ENCODE measurements at regions of chr9 and their contacts with region 1.

Region 1: DNA sequence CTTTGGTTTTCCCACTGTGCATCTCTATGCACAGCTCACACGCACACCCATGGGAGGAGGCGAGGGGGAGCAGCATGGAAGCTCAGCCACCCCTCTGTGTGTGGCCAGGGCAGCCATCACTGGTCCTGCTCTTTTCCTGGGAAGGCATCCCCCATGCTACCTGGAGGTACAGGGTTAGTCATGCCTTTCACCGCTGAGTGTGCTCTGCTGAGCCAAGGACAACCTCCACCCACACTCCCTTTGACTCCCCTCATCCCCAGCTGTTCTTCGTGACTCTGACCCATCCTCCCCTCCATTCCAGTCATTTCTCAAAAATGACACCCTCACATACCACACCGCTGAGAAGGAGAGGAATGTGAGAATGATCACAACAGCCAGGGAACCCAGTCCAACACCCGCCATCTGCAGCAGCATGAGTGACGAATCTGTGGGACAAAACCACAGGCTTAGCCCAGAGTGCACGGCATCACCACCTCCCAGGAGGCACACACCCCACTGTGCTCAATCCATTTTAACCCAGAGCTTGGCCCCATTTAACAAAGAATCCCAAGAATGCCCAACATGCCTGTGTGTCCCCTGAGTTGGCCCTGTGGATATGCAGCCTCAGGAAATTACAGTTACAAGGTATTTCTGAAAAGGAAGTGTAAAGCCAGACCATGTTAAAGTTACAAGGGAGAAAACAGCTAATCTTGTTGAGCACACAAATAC is 133.4 kb downstream of the SUSD1 start:
- DNase-seq: peak; percentile 96 to 99
- H3K4me3 ChIP-seq: no peak overlapping the region
- H3K27ac ChIP-seq: peak overlapping the region; percentile 83
- H3K4me1 ChIP-seq: peaks cover 60% of the 10 kb centered on the region
- H3K27me3 ChIP-seq: no peaks in the 10 kb centered on the region
- CTCF ChIP-seq: no peak

Region 2: GRCh38 chr9:111851566-111851965 is 190.1 kb before region 1 on chr9:
- CTCF ChIA-PET with region 1: no interaction called
- POLR2A ChIA-PET with region 1: no interaction called
- intact Hi-C with region 1: loop called (anchors 2 kb)
- DNase-seq: peak; percentile 84 to 97
- H3K4me3 ChIP-seq: no peak overlapping the region
- H3K27ac ChIP-seq: peak overlapping the region; percentile 82
- H3K4me1 ChIP-seq: peaks cover 47% of the 10 kb centered on the region
- H3K27me3 ChIP-seq: no peaks in the 10 kb centered on the region
- CTCF ChIP-seq: no peak

Region 3: GRCh38 chr9:111957856-111958652 is 83.6 kb before region 1 on chr9:
- CTCF ChIA-PET with region 1: no interaction called
- POLR2A ChIA-PET with region 1: interaction called, 7 read pairs
- intact Hi-C with region 1: loop called (anchors 1 kb)
- DNase-seq: peak; percentile 68 to 96
- H3K4me3 ChIP-seq: peak overlapping the region; percentile 7; the same call in 1 of the 2 replicates
- H3K27ac ChIP-seq: peak overlapping the region; percentile 83
- H3K4me1 ChIP-seq: peaks cover 35% of the 10 kb centered on the region
- H3K27me3 ChIP-seq: no peaks in the 10 kb centered on the region
- CTCF ChIP-seq: no peak

Region 4: GRCh38 chr9:112029921-112030444 is 11.7 kb before region 1 on chr9:
- CTCF ChIA-PET with region 1: no interaction called
- POLR2A ChIA-PET with region 1: interaction called, 20 read pairs
- intact Hi-C with region 1: loop called (anchors 1 kb)
- DNase-seq: peak; percentile 83 to 99
- H3K4me3 ChIP-seq: 0 out of 2 replicates have a peak overlapping the region, but pooled peaks have one; percentile 15
- H3K27ac ChIP-seq: peak overlapping the region; percentile 83
- H3K4me1 ChIP-seq: peaks cover 37% of the 10 kb centered on the region
- H3K27me3 ChIP-seq: no peaks in the 10 kb centered on the region
- CTCF ChIP-seq: no peak

Region 5: DNA sequence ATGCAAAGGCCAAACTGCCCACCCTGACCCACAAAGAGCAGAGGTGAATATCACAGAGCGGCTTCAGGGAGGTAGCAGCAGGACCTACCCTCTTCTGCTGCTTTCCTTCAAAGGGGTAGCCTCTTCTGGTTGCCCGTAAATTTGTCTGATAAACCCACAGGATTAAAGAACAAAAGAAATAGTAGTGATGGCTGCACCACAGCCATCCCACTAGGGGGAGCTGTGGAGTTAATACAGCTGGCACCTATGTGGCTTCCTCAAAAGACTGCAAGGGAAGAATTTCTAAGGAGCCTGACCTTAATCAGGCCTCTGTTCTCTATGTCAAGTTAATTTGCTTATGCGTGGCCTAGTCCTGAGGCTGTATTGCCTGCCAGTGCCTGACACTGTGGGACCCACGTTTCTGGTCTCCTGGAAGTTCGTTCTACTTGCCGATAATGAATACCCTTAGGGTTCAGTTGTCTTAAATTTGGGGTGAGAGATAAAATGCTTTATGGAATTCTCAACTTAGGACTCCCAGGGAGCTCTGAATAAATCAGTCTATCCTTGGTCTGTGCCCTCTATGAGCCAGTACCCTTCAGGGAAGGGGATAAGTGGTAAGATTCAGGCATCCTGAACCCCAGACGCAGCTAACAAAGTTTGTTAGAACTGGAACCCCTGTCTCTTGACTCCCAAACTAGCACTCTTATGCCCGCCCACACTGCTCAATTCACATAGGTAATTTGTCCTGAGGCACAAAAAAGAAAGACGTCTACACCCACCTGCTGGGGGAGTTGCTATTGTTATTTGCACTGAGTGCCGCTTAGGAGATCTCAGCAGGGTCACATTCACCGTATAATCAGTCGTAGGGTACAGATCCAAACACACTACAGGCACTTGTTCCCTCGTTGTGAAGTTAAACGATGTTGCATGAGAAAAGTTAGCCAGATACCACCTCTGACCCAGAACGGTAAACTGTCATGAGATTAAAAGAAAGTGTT is 56.3 kb after region 1 on chr9:
- CTCF ChIA-PET with region 1: no interaction called
- POLR2A ChIA-PET with region 1: interaction called, 10 read pairs
- intact Hi-C with region 1: no loop called
- DNase-seq: peak; percentile 64 to 68
- H3K4me3 ChIP-seq: no peak overlapping the region
- H3K27ac ChIP-seq: peak overlapping the region; percentile 9; the same call in 1 of the 2 replicates
- H3K4me1 ChIP-seq: no peaks in the 10 kb centered on the region
- H3K27me3 ChIP-seq: no peaks in the 10 kb centered on the region
- CTCF ChIP-seq: peak; percentile 92